ENCODE measurements at regions of chr9 and their contacts with region 1.

Region 1: GRCh38 chr9:127503947-127504782 is 52.9 kb downstream of the LRSAM1 start:
- DNase-seq: peak; percentile 78 to 89
- ATAC-seq: peak; percentile 76 to 98 (median 88)
- H3K4me3 ChIP-seq: no peak overlapping the region
- H3K4me3 Mint-ChIP-seq: no peak overlapping the region
- H3K27ac ChIP-seq: no peak overlapping the region
- H3K27ac Mint-ChIP-seq: no peak overlapping the region
- H3K4me1 ChIP-seq: no peaks in the 10 kb centered on the region
- H3K4me1 Mint-ChIP-seq: no peaks in the 10 kb centered on the region
- H3K27me3 ChIP-seq: no peaks in the 10 kb centered on the region
- H3K27me3 Mint-ChIP-seq: no peaks in the 10 kb centered on the region
- CTCF ChIP-seq: peak; percentile 79

Region 2: GRCh38 chr9:127576004-127576778 is 72.0 kb after region 1 on chr9:
- intact Hi-C with region 1: no loop called
- DNase-seq: no peak
- ATAC-seq: no peak
- H3K4me3 ChIP-seq: no peak overlapping the region
- H3K4me3 Mint-ChIP-seq: no peak overlapping the region
- H3K27ac ChIP-seq: no peak overlapping the region
- H3K27ac Mint-ChIP-seq: no peak overlapping the region
- H3K4me1 ChIP-seq: peaks cover 27% of the 10 kb centered on the region
- H3K4me1 Mint-ChIP-seq: peaks cover 12 to 20% of the 10 kb centered on the region in 2 donors
- H3K27me3 ChIP-seq: no peaks in the 10 kb centered on the region
- H3K27me3 Mint-ChIP-seq: no peaks in the 10 kb centered on the region
- CTCF ChIP-seq: no peak

Region 3: GRCh38 chr9:127586537-127586936 is 82.4 kb after region 1 on chr9:
- intact Hi-C with region 1: loop called (anchors 1 kb)
- DNase-seq: peak; percentile 43 to 82
- ATAC-seq: peak; percentile 48 to 76 (median 75)
- H3K4me3 ChIP-seq: no peak overlapping the region
- H3K4me3 Mint-ChIP-seq: no peak overlapping the region
- H3K27ac ChIP-seq: no peak overlapping the region
- H3K27ac Mint-ChIP-seq: no peak overlapping the region
- H3K4me1 ChIP-seq: no peaks in the 10 kb centered on the region
- H3K4me1 Mint-ChIP-seq: no peaks in the 10 kb centered on the region
- H3K27me3 ChIP-seq: peaks cover 2% of the 10 kb centered on the region
- H3K27me3 Mint-ChIP-seq: no peaks in the 10 kb centered on the region
- CTCF ChIP-seq: peak; percentile 65

Region 4: DNA sequence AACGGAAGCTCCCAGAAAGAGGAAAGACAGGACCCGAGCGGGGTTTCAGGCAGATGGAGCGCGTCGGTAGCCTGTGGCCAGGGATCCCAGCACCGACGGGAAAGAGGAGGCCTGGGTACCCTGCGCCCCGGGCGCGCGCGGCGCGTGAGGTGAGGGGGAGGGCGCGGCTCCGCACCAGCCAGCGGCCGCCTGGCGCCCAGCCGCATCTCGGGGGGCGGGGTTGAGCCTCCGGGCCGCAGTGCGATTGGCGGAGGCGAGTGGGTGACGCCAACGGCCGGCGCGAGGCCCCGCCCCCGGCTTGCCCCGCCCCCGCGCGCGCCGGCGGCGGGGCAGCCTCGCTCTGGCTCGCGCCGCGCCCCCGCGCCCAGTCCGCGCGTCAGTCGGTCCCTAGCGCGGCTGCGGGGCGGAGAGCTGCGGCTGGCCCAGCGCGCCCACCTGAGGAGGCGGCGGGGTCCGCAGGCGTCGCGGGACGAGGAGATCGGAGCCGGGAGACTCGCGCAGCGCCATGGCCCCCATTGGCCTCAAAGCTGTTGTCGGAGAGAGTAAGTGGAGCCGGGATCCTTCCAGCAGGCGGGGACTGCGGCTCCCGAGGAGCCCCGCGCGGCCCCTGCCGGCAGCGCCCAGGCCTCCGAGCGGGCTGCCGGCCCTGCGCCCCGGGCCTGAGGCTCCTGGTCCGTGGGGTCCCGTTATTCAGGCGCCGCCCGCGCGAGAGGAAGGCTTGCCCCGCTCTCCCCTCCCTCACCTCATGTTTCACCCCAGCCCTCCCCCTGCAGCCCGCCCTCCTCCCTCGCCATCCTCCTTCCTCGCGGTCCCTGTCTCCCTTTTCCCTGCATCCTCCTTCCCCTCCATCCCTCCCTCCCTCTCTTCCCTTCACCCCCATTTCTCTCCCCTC is 108.0 kb after region 1 on chr9 and contains the start of gene STXBP1:
- intact Hi-C with region 1: no loop called
- DNase-seq: peak; percentile 87 to 93
- ATAC-seq: peak; percentile 92 to 95 (median 93)
- H3K4me3 ChIP-seq: peak within 1 kb of the TSS; percentile 66
- H3K4me3 Mint-ChIP-seq: peak within 1 kb of the TSS; percentile 98
- H3K27ac ChIP-seq: no peak within 1 kb of the TSS
- H3K27ac Mint-ChIP-seq: peak within 1 kb of the TSS; percentile 73 to 77
- H3K4me1 ChIP-seq: peaks cover 32% of the 10 kb centered on the region
- H3K4me1 Mint-ChIP-seq: peaks cover 27 to 37% of the 10 kb centered on the region in 2 donors
- H3K27me3 ChIP-seq: peaks cover 27% of the 10 kb centered on the region
- H3K27me3 Mint-ChIP-seq: peaks cover 38 to 54% of the 10 kb centered on the region in 2 donors
- CTCF ChIP-seq: no peak
- total RNA-seq, gene STXBP1: 0.97 to 1.8 (median 1.6) TPM

Region 5: GRCh38 chr9:127869310-127870152 is 365.4 kb after region 1 on chr9:
- intact Hi-C with region 1: loop called (anchors 10 kb)
- DNase-seq: peak; percentile 81 to 85
- ATAC-seq: peak; percentile 85 to 90 (median 88)
- H3K4me3 ChIP-seq: no peak overlapping the region
- H3K4me3 Mint-ChIP-seq: no peak overlapping the region
- H3K27ac ChIP-seq: no peak overlapping the region
- H3K27ac Mint-ChIP-seq: peak overlapping the region; percentile 56
- H3K4me1 ChIP-seq: peaks cover 24% of the 10 kb centered on the region
- H3K4me1 Mint-ChIP-seq: peaks cover 6 to 14% of the 10 kb centered on the region in 2 donors
- H3K27me3 ChIP-seq: no peaks in the 10 kb centered on the region
- H3K27me3 Mint-ChIP-seq: no peaks in the 10 kb centered on the region
- CTCF ChIP-seq: peak; percentile 95